ENCODE measurements at regions of chr20 and their contacts with region 1.

Region 1: DNA sequence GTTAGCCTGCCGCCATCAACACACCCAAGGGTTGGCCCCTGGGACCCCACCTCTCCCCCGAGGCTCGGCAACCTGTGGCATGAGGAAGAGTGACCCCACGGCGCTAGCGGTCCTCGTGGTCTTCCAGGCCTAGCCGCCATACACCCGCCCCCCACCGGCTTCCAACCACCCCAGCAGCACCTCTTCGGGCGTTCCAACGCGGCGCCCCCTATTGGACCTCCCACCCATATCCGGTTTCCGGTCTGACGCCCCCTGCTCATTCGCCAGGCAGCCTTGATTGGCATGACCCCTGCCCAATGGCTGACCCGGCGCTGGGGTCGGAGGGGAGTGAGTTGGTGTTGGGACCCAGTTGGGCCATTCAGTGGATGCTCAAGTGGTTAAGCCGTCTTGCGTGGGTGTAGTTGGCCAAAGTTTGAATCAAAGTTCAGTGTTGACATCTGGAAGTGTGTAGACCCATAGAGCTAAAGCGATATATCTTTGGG is at the start of gene GNAS-AS1:
- DNase-seq: peak; percentile 79
- H3K4me3 Mint-ChIP-seq: peak within 1 kb of the TSS; percentile 88
- H3K27ac Mint-ChIP-seq: peak within 1 kb of the TSS; percentile 81
- H3K4me1 Mint-ChIP-seq: peaks cover 21% of the 10 kb centered on the region
- H3K27me3 Mint-ChIP-seq: peaks cover 42% of the 10 kb centered on the region
- CTCF ChIP-seq: no peak
- total RNA-seq, gene GNAS-AS1: 1.6 and 2.2 TPM in 2 replicates

Region 2: GRCh38 chr20:58839474-58839874 is 11.3 kb before region 1 on chr20:
- CTCF ChIA-PET with region 1: interaction called, 12 read pairs
- POLR2A ChIA-PET with region 1: no interaction called
- intact Hi-C with region 1: no loop called
- DNase-seq: no peak
- H3K4me3 Mint-ChIP-seq: peak overlapping the region; percentile 22
- H3K27ac Mint-ChIP-seq: no peak overlapping the region
- H3K4me1 Mint-ChIP-seq: no peaks in the 10 kb centered on the region
- H3K27me3 Mint-ChIP-seq: peaks cover 28% of the 10 kb centered on the region
- CTCF ChIP-seq: peak; percentile 35

Region 3: GRCh38 chr20:58864350-58864749 is 13.6 kb after region 1 on chr20:
- CTCF ChIA-PET with region 1: interaction called, 16 read pairs
- POLR2A ChIA-PET with region 1: no interaction called
- intact Hi-C with region 1: no loop called
- DNase-seq: peak; percentile 21
- H3K4me3 Mint-ChIP-seq: no peak overlapping the region
- H3K27ac Mint-ChIP-seq: no peak overlapping the region
- H3K4me1 Mint-ChIP-seq: no peaks in the 10 kb centered on the region
- H3K27me3 Mint-ChIP-seq: peaks cover 68% of the 10 kb centered on the region
- CTCF ChIP-seq: peak; percentile 9

Region 4: GRCh38 chr20:59253779-59254319 is 403.1 kb after region 1 on chr20:
- CTCF ChIA-PET with region 1: no interaction called
- POLR2A ChIA-PET with region 1: no interaction called
- intact Hi-C with region 1: no loop called
- DNase-seq: peak; percentile 11
- H3K4me3 Mint-ChIP-seq: no peak overlapping the region
- H3K27ac Mint-ChIP-seq: no peak overlapping the region
- H3K4me1 Mint-ChIP-seq: no peaks in the 10 kb centered on the region
- H3K27me3 Mint-ChIP-seq: peaks cover 98% of the 10 kb centered on the region
- CTCF ChIP-seq: no peak

Measured in MCF 10A (cell line).